Activated B cell treated with CpG ODN at 0.5 μM for 24 hours (primary cell): ENCODE measurements at regions of chr1 and their contacts with region 1.

Region 1: GRCh38 chr1:230167419-230167852 is 100.4 kb downstream of the GALNT2 start:
- DNase-seq: no peak
- ATAC-seq: peak; percentile 32
- H3K4me3 Mint-ChIP-seq: no peak overlapping the region
- H3K27ac Mint-ChIP-seq: peak overlapping the region; percentile 75
- H3K4me1 Mint-ChIP-seq: peaks cover 79% of the 10 kb centered on the region
- H3K27me3 Mint-ChIP-seq: no peaks in the 10 kb centered on the region
- CTCF ChIP-seq: no peak

Region 2: GRCh38 chr1:229714964-229715603 is 452.4 kb before region 1 on chr1:
- CTCF ChIA-PET with region 1: interaction called, 5 read pairs
- POLR2A ChIA-PET with region 1: no interaction called
- intact Hi-C with region 1: loop called (anchors 1 kb)
- DNase-seq: peak; percentile 24
- ATAC-seq: peak; percentile 47
- H3K4me3 Mint-ChIP-seq: no peak overlapping the region
- H3K27ac Mint-ChIP-seq: no peak overlapping the region
- H3K4me1 Mint-ChIP-seq: peaks cover 2% of the 10 kb centered on the region
- H3K27me3 Mint-ChIP-seq: no peaks in the 10 kb centered on the region
- CTCF ChIP-seq: no peak

Region 3: GRCh38 chr1:230109895-230110667 is 57.4 kb before region 1 on chr1:
- CTCF ChIA-PET with region 1: interaction called, 9 read pairs
- POLR2A ChIA-PET with region 1: interaction called, 7 read pairs
- intact Hi-C with region 1: loop called (anchors 2 kb)
- DNase-seq: peak; percentile 56
- ATAC-seq: peak; percentile 87
- H3K4me3 Mint-ChIP-seq: peak overlapping the region; percentile 68
- H3K27ac Mint-ChIP-seq: peak overlapping the region; percentile 88
- H3K4me1 Mint-ChIP-seq: peaks cover 93% of the 10 kb centered on the region
- H3K27me3 Mint-ChIP-seq: no peaks in the 10 kb centered on the region
- CTCF ChIP-seq: no peak

Region 4: GRCh38 chr1:230191079-230191804 is 23.8 kb after region 1 on chr1:
- CTCF ChIA-PET with region 1: no interaction called
- POLR2A ChIA-PET with region 1: no interaction called
- intact Hi-C with region 1: no loop called
- DNase-seq: no peak
- ATAC-seq: peak; percentile 70
- H3K4me3 Mint-ChIP-seq: peak overlapping the region; percentile 13
- H3K27ac Mint-ChIP-seq: peak overlapping the region; percentile 54
- H3K4me1 Mint-ChIP-seq: peaks cover 40% of the 10 kb centered on the region
- H3K27me3 Mint-ChIP-seq: no peaks in the 10 kb centered on the region
- CTCF ChIP-seq: no peak

Region 5: GRCh38 chr1:230212405-230212936 is 45.0 kb after region 1 on chr1:
- CTCF ChIA-PET with region 1: interaction called, 3 read pairs
- POLR2A ChIA-PET with region 1: no interaction called
- intact Hi-C with region 1: loop called (anchors 5 kb)
- DNase-seq: no peak
- ATAC-seq: peak; percentile 60
- H3K4me3 Mint-ChIP-seq: peak overlapping the region; percentile 65
- H3K27ac Mint-ChIP-seq: peak overlapping the region; percentile 84
- H3K4me1 Mint-ChIP-seq: peaks cover 97% of the 10 kb centered on the region
- H3K27me3 Mint-ChIP-seq: no peaks in the 10 kb centered on the region
- CTCF ChIP-seq: no peak

Region 6: GRCh38 chr1:230277201-230278025 is 110.0 kb after region 1 on chr1:
- CTCF ChIA-PET with region 1: no interaction called
- POLR2A ChIA-PET with region 1: no interaction called
- intact Hi-C with region 1: no loop called
- DNase-seq: no peak
- ATAC-seq: no peak
- H3K4me3 Mint-ChIP-seq: peak overlapping the region; percentile 19
- H3K27ac Mint-ChIP-seq: peak overlapping the region; percentile 27
- H3K4me1 Mint-ChIP-seq: peaks cover 82% of the 10 kb centered on the region
- H3K27me3 Mint-ChIP-seq: no peaks in the 10 kb centered on the region
- CTCF ChIP-seq: no peak